ENCODE measurements at regions of chr19 and their contacts with region 1.

Region 1: DNA sequence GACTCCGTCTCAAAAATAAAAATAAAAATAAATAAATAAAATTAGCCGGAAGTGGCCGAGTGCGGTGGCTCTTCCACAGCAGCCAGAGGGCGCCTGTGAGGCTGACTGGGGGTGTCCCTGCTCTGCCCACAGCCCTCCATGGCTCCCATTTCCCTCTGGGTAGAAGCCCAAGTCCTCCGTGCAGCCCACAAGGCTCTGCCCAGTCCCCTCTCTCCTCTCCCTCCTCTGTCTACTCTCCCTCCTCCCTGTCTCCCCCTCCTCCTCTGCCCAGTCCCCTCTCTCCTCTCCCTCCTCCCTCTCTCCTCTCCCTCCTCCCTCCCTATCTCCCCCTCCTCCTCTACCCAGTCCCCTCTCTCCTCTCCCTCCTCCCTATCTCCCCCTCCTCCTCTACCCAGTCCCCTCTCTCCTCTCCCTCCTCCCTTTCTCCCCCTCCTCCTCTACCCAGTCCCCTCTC is 20.4 kb downstream of the MISP start:
- DNase-seq: no peak

Region 2: DNA sequence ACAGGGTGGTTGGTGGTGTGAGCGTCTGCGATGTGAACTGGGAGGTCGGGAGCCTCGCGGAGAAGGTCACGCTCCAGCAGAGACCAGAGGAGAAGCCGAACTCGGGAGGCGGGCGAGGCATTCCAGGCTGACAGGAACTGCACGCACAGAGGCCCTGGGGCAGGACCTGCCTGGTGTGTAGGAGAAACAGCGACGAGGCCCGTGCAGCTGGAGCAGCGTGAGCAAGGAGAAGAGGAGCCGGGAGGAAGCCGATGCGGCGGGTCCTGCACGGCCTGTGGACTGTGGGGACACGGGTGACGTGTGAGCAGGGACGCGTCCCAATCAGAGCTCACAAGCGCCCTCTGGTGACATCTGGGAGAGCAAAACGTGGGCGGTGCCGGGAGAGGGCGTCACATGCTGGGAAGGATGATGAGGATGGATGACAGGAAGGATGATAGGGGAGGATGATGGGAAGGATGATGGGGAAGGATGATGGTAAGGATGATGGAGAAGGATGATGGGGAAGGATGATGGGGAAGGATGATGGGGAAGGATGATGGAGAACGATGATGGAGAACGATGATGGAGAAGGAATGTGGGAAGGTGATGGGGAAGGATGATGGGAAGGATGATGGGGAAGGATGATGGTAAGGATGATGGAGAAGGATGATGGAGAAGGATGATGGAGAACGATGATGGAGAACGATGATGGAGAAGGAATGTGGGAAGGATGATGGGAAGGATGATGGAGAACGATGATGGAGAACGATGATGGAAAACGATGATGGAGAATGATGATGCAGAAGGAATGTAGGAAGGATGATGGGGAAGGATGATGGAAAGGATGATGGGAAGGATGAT is 291.1 kb before region 1 on chr19:
- intact Hi-C with region 1: no loop called
- DNase-seq: peak; percentile 96

Region 3: DNA sequence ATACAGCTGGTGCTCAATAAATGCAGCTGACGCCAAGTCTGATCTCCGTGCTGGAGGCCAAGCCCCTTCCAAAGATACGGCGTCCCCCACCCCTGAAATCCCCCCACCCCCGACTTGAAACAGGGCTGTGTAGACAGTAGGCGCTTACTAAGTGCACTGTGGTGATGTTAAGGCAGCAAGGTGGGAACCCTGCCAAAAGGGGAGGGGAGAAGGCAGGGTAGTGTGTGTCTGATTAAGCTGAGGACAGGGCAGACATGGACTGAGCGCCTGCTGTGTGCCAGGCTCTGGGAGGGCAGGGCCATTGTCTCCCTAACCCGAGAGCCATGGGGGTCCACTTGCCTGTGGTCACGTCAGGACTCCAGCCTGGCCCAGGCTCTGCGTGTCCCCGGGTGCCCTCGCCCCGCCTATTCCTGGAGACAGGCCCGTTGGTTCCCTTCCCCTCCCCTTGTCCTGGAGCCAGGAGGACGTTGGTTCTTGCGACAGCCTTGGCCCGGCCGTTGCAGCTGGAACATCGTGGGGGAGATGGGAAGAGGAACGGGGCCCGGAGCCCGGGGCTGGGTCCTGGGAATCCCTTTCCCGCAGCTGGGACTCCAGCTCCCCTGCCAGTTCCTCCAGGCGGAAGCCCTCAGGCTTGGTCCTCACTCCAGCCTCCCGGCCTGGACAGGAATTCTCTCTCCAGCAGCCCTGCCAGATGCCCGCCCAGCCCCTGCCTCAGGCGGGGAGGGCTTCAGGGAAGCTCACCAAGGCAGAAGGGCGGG is 79.0 kb after region 1 on chr19:
- intact Hi-C with region 1: loop called in 1 of 2 experiments (anchors 5 kb)
- DNase-seq: peak; percentile 98

Region 4: DNA sequence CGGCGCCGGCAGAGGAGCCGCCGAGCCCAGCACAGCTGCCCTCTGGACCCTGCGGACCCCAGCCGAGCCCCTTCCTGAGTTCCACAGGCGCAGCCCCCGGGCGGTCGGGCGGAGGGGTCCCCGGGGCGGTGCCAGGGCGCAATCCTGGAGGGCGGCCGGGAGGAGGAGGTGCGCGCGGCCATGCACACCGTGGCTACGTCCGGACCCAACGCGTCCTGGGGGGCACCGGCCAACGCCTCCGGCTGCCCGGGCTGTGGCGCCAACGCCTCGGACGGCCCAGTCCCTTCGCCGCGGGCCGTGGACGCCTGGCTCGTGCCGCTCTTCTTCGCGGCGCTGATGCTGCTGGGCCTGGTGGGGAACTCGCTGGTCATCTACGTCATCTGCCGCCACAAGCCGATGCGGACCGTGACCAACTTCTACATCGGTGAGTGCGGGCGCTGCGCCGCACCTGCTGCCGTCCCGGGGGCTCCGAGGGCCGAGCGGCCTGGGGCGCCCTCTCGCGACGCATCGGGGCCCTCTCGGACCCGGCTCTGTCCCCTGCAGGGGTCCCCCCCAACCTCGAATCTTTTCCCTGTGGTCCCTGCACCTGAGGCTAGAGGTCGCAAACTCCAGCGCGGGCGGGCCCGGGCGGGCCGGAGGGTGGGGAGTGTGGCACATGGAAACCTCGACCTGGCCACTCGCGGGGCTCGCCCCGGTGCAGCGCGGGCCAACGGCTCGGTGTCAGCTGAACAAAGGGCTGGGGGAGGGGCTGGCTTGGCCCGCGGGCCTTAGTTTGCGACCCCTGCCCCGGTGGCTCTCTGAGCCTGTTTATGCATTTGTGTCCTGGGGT is 146.2 kb after region 1 on chr19 and contains the start of gene KISS1R:
- intact Hi-C with region 1: loop called (anchors 5 kb)
- DNase-seq: no peak
- total RNA-seq, gene KISS1R: not detected

Region 5: GRCh38 chr19:924943-925525 is 153.7 kb after region 1 on chr19:
- intact Hi-C with region 1: loop called in 1 of 2 experiments (anchors 5 kb)
- DNase-seq: no peak

Region 6: DNA sequence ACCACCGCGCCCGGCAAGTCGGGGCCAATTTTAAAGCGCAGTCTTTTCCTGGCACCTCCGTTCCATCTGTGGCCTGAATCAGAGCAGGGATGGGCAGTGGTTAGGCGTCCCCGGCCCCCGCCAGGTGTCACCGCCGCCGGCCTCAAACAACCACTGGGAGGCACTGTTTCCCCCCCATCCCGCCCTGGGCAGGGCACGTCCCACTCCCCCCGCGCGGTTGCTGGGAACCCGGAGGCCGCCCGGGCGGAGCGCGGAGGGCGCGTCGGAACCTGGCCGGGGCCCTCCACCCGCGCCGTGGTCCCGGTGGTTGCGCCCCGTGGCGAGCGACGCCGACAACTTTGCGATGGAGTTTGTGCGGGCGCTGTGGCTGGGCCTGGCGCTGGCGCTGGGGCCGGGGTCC is 228.7 kb after region 1 on chr19 and contains the start of gene GRIN3B:
- intact Hi-C with region 1: loop called (anchors 10 kb)
- DNase-seq: peak; percentile 91
- total RNA-seq, gene GRIN3B: 0.05 TPM in 1 of 2 donors, not detected in the other

Measured in posterior vena cava (tissue), 2 donors.